ENCODE measurements at regions of chr6 and their contacts with region 1.

Region 1: GRCh38 chr6:157535339-157536222 is 154.6 kb downstream of the ZDHHC14 start:
- DNase-seq: peak; percentile 49
- ATAC-seq: peak; percentile 88
- H3K4me3 Mint-ChIP-seq: peak overlapping the region; percentile 47
- H3K27ac Mint-ChIP-seq: peak overlapping the region; percentile 88
- H3K4me1 Mint-ChIP-seq: peaks cover 35% of the 10 kb centered on the region
- H3K27me3 Mint-ChIP-seq: peaks cover 9% of the 10 kb centered on the region

Region 2: GRCh38 chr6:157368359-157369049 is 167.1 kb before region 1 on chr6:
- CTCF ChIA-PET with region 1: no interaction called
- POLR2A ChIA-PET with region 1: no interaction called
- intact Hi-C with region 1: loop called in 1 of 2 experiments (anchors 5 kb)
- DNase-seq: peak; percentile 24
- ATAC-seq: peak; percentile 72
- H3K4me3 Mint-ChIP-seq: no peak overlapping the region
- H3K27ac Mint-ChIP-seq: no peak overlapping the region
- H3K4me1 Mint-ChIP-seq: peaks cover 19% of the 10 kb centered on the region
- H3K27me3 Mint-ChIP-seq: peaks cover 29% of the 10 kb centered on the region

Region 3: GRCh38 chr6:157461000-157461915 is 74.3 kb before region 1 on chr6:
- CTCF ChIA-PET with region 1: no interaction called
- POLR2A ChIA-PET with region 1: no interaction called
- intact Hi-C with region 1: loop called (anchors 1 kb)
- DNase-seq: peak; percentile 90
- ATAC-seq: peak; percentile 77
- H3K4me3 Mint-ChIP-seq: no peak overlapping the region
- H3K27ac Mint-ChIP-seq: peak overlapping the region; percentile 89
- H3K4me1 Mint-ChIP-seq: peaks cover 56% of the 10 kb centered on the region
- H3K27me3 Mint-ChIP-seq: no peaks in the 10 kb centered on the region

Region 4: GRCh38 chr6:157830354-157831017 is 294.9 kb after region 1 on chr6:
- CTCF ChIA-PET with region 1: no interaction called
- POLR2A ChIA-PET with region 1: no interaction called
- intact Hi-C with region 1: no loop called
- DNase-seq: no peak
- ATAC-seq: peak; percentile 48
- H3K4me3 Mint-ChIP-seq: peak overlapping the region; percentile 37
- H3K27ac Mint-ChIP-seq: peak overlapping the region; percentile 75
- H3K4me1 Mint-ChIP-seq: peaks cover 76% of the 10 kb centered on the region
- H3K27me3 Mint-ChIP-seq: no peaks in the 10 kb centered on the region

Region 5: GRCh38 chr6:159399751-159400221 is 1864.2 kb after region 1 on chr6:
- CTCF ChIA-PET with region 1: no interaction called
- POLR2A ChIA-PET with region 1: no interaction called
- intact Hi-C with region 1: no loop called
- DNase-seq: no peak
- ATAC-seq: no peak
- H3K4me3 Mint-ChIP-seq: no peak overlapping the region
- H3K27ac Mint-ChIP-seq: no peak overlapping the region
- H3K4me1 Mint-ChIP-seq: no peaks in the 10 kb centered on the region
- H3K27me3 Mint-ChIP-seq: peaks cover 7% of the 10 kb centered on the region

Measured in activated CD4-positive, alpha-beta T cell treated with anti-CD3 and anti-CD28 coated beads for 36 hours (primary cell).